Mammary epithelial cell (primary cell): ENCODE measurements at regions of chr4 and their contacts with region 1.

Region 1: GRCh38 chr4:91092398-91093090 is 965.4 kb downstream of the CCSER1 start:
- DNase-seq: peak; percentile 20
- H3K4me3 ChIP-seq: no peak overlapping the region
- H3K27ac ChIP-seq: no peak overlapping the region
- H3K4me1 ChIP-seq: no peaks in the 10 kb centered on the region
- H3K27me3 ChIP-seq: no peaks in the 10 kb centered on the region
- CTCF ChIP-seq: peak in 1 of 2 donors; percentile 39

Region 2: GRCh38 chr4:90799894-90800293 is 292.6 kb before region 1 on chr4:
- CTCF ChIA-PET with region 1: no interaction called
- dilution Hi-C with region 1: no loop called
- in situ Hi-C with region 1: no loop called
- intact Hi-C with region 1: loop called (anchors 10 kb)
- DNase-seq: no peak
- H3K4me3 ChIP-seq: no peak overlapping the region
- H3K27ac ChIP-seq: no peak overlapping the region
- H3K4me1 ChIP-seq: no peaks in the 10 kb centered on the region
- H3K27me3 ChIP-seq: no peaks in the 10 kb centered on the region
- CTCF ChIP-seq: peak in 1 of 2 donors; percentile 27

Region 3: GRCh38 chr4:91035276-91035675 is 57.3 kb before region 1 on chr4:
- CTCF ChIA-PET with region 1: no interaction called
- dilution Hi-C with region 1: no loop called
- in situ Hi-C with region 1: no loop called
- intact Hi-C with region 1: no loop called
- DNase-seq: no peak
- H3K4me3 ChIP-seq: no peak overlapping the region
- H3K27ac ChIP-seq: no peak overlapping the region
- H3K4me1 ChIP-seq: no peaks in the 10 kb centered on the region
- H3K27me3 ChIP-seq: peaks cover 2% of the 10 kb centered on the region
- CTCF ChIP-seq: no peak

Region 4: DNA sequence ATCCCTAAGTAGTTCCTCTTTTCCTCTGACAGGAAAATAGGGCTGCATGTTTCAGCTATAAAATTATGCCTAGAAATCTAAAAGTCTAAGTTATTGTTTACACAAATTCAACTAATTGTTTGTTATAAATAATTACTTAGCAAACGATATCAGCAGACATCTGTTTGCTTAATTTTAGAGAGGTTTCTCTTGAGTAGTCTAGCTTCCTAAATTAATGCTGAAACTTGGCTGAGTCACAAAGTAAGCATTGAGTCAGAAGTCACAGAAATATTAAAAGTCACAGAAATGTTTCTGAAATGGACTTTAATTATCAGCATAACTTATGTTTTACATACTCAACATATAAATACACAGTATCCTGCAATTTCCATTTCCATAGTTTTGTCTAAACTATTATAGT is 78.7 kb after region 1 on chr4:
- CTCF ChIA-PET with region 1: no interaction called
- dilution Hi-C with region 1: no loop called
- in situ Hi-C with region 1: no loop called
- intact Hi-C with region 1: no loop called
- DNase-seq: no peak
- H3K4me3 ChIP-seq: no peak overlapping the region
- H3K27ac ChIP-seq: no peak overlapping the region
- H3K4me1 ChIP-seq: no peaks in the 10 kb centered on the region
- H3K27me3 ChIP-seq: no peaks in the 10 kb centered on the region
- CTCF ChIP-seq: no peak